AG04449 (cell line): ENCODE measurements at regions of chr3 and their contacts with region 1.

Region 1: GRCh38 chr3:185733980-185734724 is 90.7 kb downstream of the IGF2BP2 start:
- DNase-seq: no peak
- H3K4me3 ChIP-seq: no peak overlapping the region
- CTCF ChIP-seq: peak; percentile 46

Region 2: DNA sequence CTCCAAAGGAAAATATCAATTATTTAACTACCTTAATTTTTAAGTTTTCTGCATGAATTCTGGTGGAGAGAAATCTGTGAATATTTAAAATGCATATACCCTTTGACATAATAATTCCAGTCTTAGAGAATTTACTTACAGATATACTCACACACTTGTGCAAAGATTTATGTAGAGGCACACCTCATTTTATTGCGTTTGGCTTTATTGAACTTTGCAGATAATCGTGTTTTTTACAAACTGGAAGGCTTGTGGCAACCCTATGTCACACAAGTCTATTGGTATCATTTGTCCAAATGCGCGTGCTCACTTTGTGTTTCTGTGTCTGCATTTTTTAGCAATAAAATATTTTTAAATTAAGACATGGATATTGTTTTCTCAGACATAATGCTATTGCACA is 66.6 kb before region 1 on chr3:
- CTCF ChIA-PET with region 1: no interaction called
- POLR2A ChIA-PET with region 1: no interaction called
- DNase-seq: no peak
- H3K4me3 ChIP-seq: no peak overlapping the region
- CTCF ChIP-seq: no peak

Region 3: GRCh38 chr3:185717121-185717520 is 17.0 kb before region 1 on chr3:
- CTCF ChIA-PET with region 1: interaction called, 28 read pairs
- POLR2A ChIA-PET with region 1: interaction called, 8 read pairs
- DNase-seq: peak; percentile 63
- H3K4me3 ChIP-seq: no peak overlapping the region
- CTCF ChIP-seq: no peak

Region 4: GRCh38 chr3:185753354-185753753 is 19.2 kb after region 1 on chr3:
- CTCF ChIA-PET with region 1: no interaction called
- POLR2A ChIA-PET with region 1: no interaction called
- DNase-seq: no peak
- H3K4me3 ChIP-seq: no peak overlapping the region
- CTCF ChIP-seq: no peak

Region 5: GRCh38 chr3:185764163-185764979 is 30.2 kb after region 1 on chr3:
- CTCF ChIA-PET with region 1: interaction called, 10 read pairs
- POLR2A ChIA-PET with region 1: no interaction called
- DNase-seq: no peak
- H3K4me3 ChIP-seq: no peak overlapping the region
- CTCF ChIP-seq: no peak

Region 6: GRCh38 chr3:185912929-185913901 is 179.1 kb after region 1 on chr3:
- CTCF ChIA-PET with region 1: interaction called, 10 read pairs
- POLR2A ChIA-PET with region 1: no interaction called
- DNase-seq: no peak
- H3K4me3 ChIP-seq: no peak overlapping the region
- CTCF ChIP-seq: no peak